Psoas muscle (tissue), 8 donors: ENCODE measurements at regions of chr3 and their contacts with region 1.

Region 1: DNA sequence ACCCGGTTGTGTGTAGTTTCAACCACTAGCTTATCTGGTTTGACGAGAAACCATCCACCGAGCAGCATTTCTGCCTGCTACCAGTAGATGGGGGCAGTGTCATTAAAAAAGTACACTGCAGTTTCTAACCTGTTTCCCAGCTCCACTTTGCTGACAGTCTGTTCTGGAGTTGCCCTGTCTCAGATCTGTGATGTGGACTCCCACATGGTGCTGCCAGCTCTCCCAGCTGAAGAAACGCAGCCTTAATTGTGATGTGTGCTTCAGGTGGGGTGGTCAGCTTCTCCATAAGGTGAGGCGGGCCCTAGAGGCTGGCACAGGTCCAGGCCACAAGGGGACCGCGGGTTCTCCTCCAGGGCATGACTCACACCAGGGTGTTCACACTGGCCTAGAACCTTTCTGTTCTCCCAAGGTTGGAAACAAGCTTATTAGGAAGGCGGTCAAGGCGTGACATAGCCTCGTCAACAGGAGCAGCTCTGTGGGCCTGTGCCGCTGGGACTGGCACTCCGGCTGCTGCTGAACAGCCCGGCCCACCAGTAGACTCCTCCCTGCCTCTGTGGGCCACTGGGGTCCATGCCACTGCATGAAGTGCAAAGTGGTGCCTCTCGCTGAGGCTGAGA is 2.9 kb upstream of the FAM43A start:
- DNase-seq: peak; percentile 60 to 72
- ATAC-seq: peak; percentile 69 to 77 (median 76)
- H3K4me3 ChIP-seq: no peak overlapping the region
- H3K27ac ChIP-seq: peak overlapping the region; percentile 61
- H3K4me1 ChIP-seq: peaks cover 13% of the 10 kb centered on the region
- H3K27me3 ChIP-seq: no peaks in the 10 kb centered on the region
- CTCF ChIP-seq: peak; percentile 87

Region 2: GRCh38 chr3:194422188-194422587 is 260.6 kb before region 1 on chr3:
- intact Hi-C with region 1: no loop called
- DNase-seq: no peak
- ATAC-seq: no peak
- H3K4me3 ChIP-seq: no peak overlapping the region
- H3K27ac ChIP-seq: no peak overlapping the region
- H3K4me1 ChIP-seq: no peaks in the 10 kb centered on the region
- H3K27me3 ChIP-seq: no peaks in the 10 kb centered on the region
- CTCF ChIP-seq: no peak

Region 3: DNA sequence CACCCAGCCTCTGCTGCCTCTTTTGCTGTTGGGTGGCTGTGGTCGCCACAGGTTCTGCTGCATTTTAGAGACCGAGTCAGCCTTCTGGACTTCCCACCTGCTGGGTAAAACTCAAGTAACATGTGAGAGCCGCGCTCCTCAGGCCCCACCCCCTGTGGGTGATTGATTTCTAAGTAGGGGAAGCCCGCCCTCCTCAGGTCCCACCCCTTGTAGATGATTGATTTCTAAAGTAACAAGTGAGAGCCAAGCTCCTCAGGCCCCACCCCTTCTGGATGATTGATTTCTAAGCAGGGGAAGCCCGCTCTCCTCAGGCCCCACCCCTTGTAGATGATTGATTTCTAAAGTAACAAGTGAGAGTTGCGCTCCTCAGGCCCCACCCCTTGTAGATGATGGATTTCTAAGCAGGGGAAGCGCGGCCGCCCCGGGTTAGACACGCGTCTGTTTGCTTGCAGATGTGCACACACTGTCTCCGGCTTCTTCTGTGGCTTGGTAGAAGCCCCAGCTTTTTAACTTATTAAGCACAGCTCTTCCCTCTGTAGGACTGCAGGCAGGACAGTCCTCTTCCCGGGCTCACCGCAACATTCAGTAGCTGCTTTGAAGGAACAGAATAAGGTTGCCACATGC is 86.3 kb after region 1 on chr3:
- intact Hi-C with region 1: loop called in 1 of 2 experiments (anchors 5 kb)
- DNase-seq: peak; percentile 88 to 91
- ATAC-seq: peak; percentile 98 to 99 (median 99)
- H3K4me3 ChIP-seq: peak overlapping the region; percentile 57
- H3K27ac ChIP-seq: peak overlapping the region; percentile 61
- H3K4me1 ChIP-seq: peaks cover 17% of the 10 kb centered on the region
- H3K27me3 ChIP-seq: no peaks in the 10 kb centered on the region
- CTCF ChIP-seq: no peak

Region 4: DNA sequence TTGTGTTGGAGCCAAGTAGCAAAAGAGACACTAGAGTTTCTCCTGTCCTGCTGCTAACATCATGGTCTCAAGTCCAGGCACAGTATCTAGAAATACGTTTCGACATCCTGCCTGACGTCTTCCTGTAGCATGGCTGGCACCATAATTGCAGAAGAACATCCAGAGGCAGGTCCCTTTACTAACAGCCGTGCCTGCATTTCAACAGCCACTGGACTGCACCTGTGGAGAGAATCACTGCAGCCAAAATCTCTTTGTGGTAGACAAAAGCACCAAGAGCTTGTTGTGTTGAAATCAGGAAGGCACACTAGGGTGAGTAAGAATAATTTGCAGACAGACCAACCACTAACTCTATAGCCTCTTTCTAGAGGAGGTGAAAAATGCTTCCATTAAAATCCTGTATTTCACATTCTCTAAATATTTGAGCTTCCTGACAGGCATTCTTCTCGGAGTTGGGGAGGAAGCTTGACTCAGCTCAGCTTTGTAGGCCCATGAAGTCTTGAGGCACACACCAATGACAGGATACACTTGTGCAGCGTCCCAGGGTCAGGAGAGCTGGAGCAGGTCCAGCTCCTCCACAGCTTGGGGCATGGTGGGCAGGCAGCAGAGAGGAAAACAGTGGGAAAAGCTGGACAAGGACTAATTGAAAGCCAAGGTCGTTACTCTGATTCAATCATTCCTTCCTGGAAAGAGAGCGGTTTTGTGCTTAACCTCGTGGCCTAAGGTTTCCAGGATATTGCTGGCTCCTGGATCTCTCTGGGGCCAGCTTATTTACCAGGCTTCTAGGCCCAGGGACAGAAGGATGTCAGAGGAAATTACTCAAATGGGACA is 247.8 kb after region 1 on chr3:
- intact Hi-C with region 1: loop called in 1 of 2 experiments (anchors 5 kb)
- DNase-seq: peak; percentile 54 to 62
- ATAC-seq: peak; percentile 57 to 76 (median 70)
- H3K4me3 ChIP-seq: no peak overlapping the region
- H3K27ac ChIP-seq: peak overlapping the region; percentile 51
- H3K4me1 ChIP-seq: peaks cover 12% of the 10 kb centered on the region
- H3K27me3 ChIP-seq: peaks cover 0 to 3% (median 0%) of the 10 kb centered on the region in 3 donors
- CTCF ChIP-seq: no peak

Region 5: GRCh38 chr3:195001961-195002861 is 319.4 kb after region 1 on chr3:
- intact Hi-C with region 1: loop called in 1 of 2 experiments (anchors 5 kb)
- DNase-seq: peak; percentile 55 to 77
- ATAC-seq: peak; percentile 65 to 86 (median 82)
- H3K4me3 ChIP-seq: no peak overlapping the region
- H3K27ac ChIP-seq: peak overlapping the region; percentile 53
- H3K4me1 ChIP-seq: peaks cover 13% of the 10 kb centered on the region
- H3K27me3 ChIP-seq: no peaks in the 10 kb centered on the region
- CTCF ChIP-seq: peak; percentile 55

Region 6: GRCh38 chr3:195154793-195155535 is 472.2 kb after region 1 on chr3:
- intact Hi-C with region 1: loop called in 1 of 2 experiments (anchors 5 kb)
- DNase-seq: peak; percentile 82 to 89
- ATAC-seq: peak; percentile 68 to 85 (median 83)
- H3K4me3 ChIP-seq: peak overlapping the region; percentile 47
- H3K27ac ChIP-seq: peak overlapping the region; percentile 77
- H3K4me1 ChIP-seq: peaks cover 25% of the 10 kb centered on the region
- H3K27me3 ChIP-seq: no peaks in the 10 kb centered on the region
- CTCF ChIP-seq: no peak

Region 7: GRCh38 chr3:195522254-195523023 is 839.6 kb after region 1 on chr3:
- intact Hi-C with region 1: loop called in 1 of 2 experiments (anchors 5 kb)
- DNase-seq: no peak
- ATAC-seq: no peak
- H3K4me3 ChIP-seq: no peak overlapping the region
- H3K27ac ChIP-seq: no peak overlapping the region
- H3K4me1 ChIP-seq: peaks cover 9% of the 10 kb centered on the region
- H3K27me3 ChIP-seq: no peaks in the 10 kb centered on the region
- CTCF ChIP-seq: peak; percentile 83